ENCODE measurements at regions of chr20 and their contacts with region 1.

Region 1: GRCh38 chr20:58209652-58210397 is 18.6 kb downstream of the ANKRD60 start:
- DNase-seq: peak; percentile 69 to 86
- H3K4me3 ChIP-seq: no peak overlapping the region
- H3K27ac ChIP-seq: peak overlapping the region in 1 of 2 donors; percentile 18
- H3K4me1 ChIP-seq: peaks cover 0 to 9% (median 2%) of the 10 kb centered on the region in 4 donors
- H3K27me3 ChIP-seq: peaks cover 0 to 21% of the 10 kb centered on the region in 2 donors
- CTCF ChIP-seq: peak; percentile 100

Region 2: DNA sequence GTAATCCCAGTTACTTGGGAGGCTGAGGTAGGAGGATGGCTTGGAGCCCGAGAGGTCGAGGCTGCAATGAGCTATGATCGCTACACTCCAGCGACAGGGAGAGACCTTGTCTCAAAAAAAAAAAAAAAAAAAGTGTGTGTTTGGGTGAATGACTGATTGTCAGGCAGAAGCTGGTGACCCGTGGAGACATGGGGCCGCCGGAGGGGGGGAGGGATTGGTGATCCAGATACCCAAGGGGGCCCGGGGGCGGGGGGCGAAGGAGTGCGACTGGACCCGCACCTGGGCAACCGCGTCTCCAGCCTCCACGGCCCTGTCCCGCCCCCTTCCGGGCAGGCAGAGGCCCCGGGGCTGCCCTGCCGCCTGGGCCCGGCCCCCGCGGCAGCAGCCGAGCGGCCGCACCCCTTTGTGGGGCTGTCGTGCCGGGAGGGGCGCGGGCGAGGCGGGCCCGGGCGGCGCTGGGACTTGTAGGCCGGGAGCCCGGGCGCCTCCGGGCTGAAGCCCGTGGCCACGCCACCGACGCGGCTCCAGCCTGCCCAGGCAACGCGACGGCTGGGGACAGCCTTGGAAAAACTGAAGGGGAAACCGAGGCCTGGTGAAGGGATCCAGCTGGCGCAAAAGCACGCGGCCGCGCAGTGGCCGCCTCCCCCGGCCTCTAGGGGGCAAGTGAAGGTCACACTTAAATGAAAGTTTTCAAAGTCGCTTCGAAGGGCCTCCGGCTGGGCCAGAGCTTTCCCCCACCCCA is 820.7 kb before region 1 on chr20:
- intact Hi-C with region 1: loop called (anchors 10 kb)
- DNase-seq: peak; percentile 80 to 90
- H3K4me3 ChIP-seq: peak overlapping the region; percentile 35 to 54
- H3K27ac ChIP-seq: peak overlapping the region; percentile 71 to 82
- H3K4me1 ChIP-seq: peaks cover 0 to 45% (median 27%) of the 10 kb centered on the region in 4 donors
- H3K27me3 ChIP-seq: no peaks in the 10 kb centered on the region
- CTCF ChIP-seq: peak; percentile 25 to 35

Region 3: DNA sequence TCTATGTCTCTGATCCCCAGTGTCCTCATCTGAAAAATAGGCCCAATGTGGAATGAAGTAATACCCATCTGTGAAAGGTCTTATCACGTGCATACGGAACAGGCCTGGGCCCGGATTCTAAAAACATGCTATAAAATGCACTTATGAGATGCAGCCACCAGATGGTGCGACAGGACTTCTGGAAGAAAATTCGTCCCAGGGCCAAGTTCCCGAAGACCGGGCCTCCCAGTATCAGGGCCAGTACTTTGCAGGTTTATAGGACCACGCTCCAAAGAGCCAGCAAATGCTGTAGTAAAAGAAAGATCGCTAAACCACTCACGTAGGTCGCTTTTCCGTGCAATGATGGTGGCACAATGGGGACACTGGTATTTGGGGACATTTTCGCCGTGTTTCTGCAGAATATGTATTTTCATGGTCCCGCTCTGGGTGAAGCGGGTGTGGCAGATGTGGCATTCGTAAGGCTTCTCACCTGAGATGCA is 695.5 kb before region 1 on chr20:
- intact Hi-C with region 1: loop called (anchors 5 kb)
- DNase-seq: peak; percentile 81 to 85
- H3K4me3 ChIP-seq: no peak overlapping the region
- H3K27ac ChIP-seq: no peak overlapping the region
- H3K4me1 ChIP-seq: no peaks in the 10 kb centered on the region
- H3K27me3 ChIP-seq: peaks cover 0 to 5% of the 10 kb centered on the region in 2 donors
- CTCF ChIP-seq: peak; percentile 80 to 91

Region 4: GRCh38 chr20:57522380-57522993 is 687.3 kb before region 1 on chr20:
- intact Hi-C with region 1: loop called (anchors 5 kb)
- DNase-seq: peak in 1 of 2 donors; percentile 29
- H3K4me3 ChIP-seq: no peak overlapping the region
- H3K27ac ChIP-seq: no peak overlapping the region
- H3K4me1 ChIP-seq: no peaks in the 10 kb centered on the region
- H3K27me3 ChIP-seq: peaks cover 0 to 21% of the 10 kb centered on the region in 2 donors
- CTCF ChIP-seq: no peak

Region 5: DNA sequence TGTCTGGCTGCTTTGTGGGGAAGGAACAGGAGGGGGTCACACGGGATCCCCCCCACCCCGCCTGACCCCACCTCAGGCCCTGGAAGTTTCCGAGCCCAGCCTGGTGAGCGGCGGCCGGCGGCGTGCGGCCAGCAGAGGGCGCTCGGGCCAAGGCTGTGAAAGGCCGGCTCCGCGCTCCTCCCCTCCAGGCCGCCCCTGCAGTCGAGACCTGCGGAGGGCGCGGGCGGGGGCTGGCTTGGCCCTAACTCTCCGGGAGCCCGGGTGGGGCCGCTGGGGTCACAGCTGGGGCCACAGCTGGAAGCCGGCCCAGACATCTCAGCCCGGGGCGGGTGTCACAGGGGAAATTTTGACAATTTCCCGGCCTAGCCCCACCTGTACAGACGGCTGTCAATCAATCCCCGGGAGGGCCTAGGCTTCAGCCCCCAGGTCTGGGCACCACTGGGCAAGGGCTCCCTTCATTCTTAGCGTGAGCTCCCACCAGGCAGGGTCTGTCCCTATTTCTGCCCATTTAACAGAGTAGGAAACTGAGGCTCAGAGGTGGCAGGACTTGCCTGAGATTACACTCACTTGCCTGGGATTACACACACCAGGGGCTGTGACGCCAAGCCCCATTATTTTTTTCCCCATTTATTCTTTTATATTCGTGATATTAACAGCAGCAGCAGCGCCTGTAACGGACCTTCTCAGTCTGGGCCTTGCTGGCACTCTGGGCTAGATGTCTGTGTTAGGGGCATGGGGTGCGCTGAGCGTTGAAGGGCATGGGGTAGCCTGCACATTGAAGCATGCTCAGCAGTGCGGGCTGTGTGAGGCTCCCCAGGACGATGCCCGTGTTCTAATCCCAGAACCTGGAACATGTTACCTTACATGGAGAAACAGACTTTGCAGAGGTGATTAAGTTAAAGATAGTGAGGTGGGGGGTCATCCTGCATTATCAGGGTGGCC is 612.6 kb before region 1 on chr20:
- intact Hi-C with region 1: loop called (anchors 1 kb)
- DNase-seq: peak; percentile 56 to 80
- H3K4me3 ChIP-seq: peak overlapping the region in 1 of 2 donors; percentile 26
- H3K27ac ChIP-seq: no peak overlapping the region
- H3K4me1 ChIP-seq: peaks cover 0 to 22% (median 7%) of the 10 kb centered on the region in 4 donors
- H3K27me3 ChIP-seq: peaks cover 0 to 14% of the 10 kb centered on the region in 2 donors
- CTCF ChIP-seq: peak; percentile 92 to 97

Measured in tibial artery (tissue), 4 donors.